WTC11 (cell line): ENCODE measurements at regions of chr19 and their contacts with region 1.

Region 1: DNA sequence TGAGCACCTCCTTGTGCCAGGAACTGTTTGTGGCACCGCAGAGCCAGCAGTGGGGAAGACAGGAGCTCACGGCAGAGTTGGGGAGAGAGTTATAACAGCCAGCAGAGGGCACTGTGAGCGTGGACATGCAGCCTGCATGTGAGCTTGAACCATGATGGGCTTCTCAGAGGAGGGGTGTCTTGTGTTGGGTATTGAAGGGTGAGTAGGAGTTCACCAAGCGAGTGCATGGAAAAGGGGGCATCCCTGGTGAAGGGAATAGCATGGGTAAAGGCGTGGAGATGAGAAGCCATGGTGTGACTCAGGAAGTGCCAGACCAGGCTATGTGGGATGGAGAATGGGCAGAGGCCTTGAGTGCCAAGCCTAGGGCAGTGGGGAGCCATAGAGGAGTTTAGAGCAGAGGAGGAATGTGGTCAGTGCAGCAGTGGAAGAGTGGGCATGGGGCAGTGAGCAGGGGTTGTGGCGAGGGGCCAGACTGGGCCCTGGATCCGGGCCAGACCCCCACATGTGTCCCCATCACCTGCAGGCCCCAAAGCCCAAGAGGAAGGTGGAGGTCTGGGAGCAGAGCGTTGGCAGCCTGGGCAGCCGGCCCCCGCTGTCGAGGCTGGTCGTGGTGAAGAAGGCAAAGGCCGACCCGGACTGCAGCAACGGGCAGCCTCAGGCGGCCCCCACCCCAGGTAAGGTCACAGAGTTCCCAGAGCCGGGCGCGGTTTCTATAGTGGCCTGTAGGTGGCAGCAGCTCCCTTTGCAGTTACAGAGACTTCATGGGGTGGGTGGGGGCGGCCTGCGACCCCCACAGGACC is 11.8 kb upstream of the SHD start:
- DNase-seq: peak; percentile 88
- ATAC-seq: peak; percentile 93
- H3K4me3 Mint-ChIP-seq: no peak overlapping the region
- H3K27ac Mint-ChIP-seq: 0 out of 2 replicates have a peak overlapping the region, but pooled peaks have one; percentile 5
- H3K4me1 Mint-ChIP-seq: no peaks in the 10 kb centered on the region; the same call in 1 of the 2 replicates
- H3K27me3 Mint-ChIP-seq: no peaks in the 10 kb centered on the region
- CTCF ChIP-seq: peak; percentile 86

Region 2: DNA sequence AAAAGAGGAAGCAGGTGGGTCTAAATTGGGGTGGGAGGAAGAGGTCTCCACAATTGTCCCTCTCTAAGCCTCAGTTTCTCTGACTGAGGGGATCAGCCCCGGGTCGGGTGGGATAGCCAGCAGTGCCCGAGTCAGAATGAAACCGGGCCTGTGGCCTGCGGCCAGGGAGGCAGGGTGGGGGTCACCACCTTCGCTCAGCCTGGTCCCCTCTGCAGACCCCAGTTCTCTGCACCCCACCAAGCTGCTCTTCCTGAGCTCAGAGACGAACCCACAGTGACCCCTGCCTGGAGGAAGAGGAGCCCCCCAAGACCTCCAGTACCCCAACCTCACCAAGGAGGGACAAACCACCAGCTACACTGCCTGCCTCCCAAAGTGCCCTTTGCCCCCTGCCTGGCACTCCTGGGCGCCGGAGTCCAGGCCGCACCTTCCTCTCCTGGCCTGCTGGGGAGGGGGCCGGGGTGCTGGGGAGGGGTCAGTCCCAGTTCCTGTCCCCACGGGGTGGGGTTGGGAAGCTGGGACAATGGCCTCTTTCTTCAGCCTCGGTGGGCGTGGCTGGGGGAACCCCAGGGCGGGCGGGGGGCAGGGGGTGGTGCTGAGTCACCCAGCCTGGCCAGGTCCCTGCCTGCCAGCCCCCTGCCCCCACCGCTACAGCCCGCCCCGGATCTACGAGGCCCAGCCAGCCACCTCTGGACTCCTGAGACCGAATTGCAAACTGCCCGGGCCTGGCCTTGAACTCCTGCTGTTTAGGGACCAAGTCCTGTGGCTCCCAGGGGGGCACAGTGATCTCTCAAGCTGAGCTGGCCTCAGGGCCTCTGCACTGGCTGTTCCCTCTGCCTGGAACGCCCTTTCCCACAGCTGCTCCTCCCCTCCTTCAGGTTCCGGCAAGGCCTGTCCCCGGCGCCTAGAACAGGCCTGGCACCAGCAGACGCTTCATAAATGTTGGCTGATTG is 215.0 kb before region 1 on chr19:
- CTCF ChIA-PET with region 1: no interaction called
- POLR2A ChIA-PET with region 1: no interaction called
- DNase-seq: no peak
- ATAC-seq: no peak
- H3K4me3 Mint-ChIP-seq: no peak overlapping the region
- H3K27ac Mint-ChIP-seq: peak overlapping the region; percentile 79
- H3K4me1 Mint-ChIP-seq: peaks cover 6% of the 10 kb centered on the region; the same call in 1 of the 2 replicates
- H3K27me3 Mint-ChIP-seq: no peaks in the 10 kb centered on the region
- CTCF ChIP-seq: no peak

Region 3: GRCh38 chr19:4139614-4140236 is 127.6 kb before region 1 on chr19:
- CTCF ChIA-PET with region 1: interaction called, 15 read pairs
- POLR2A ChIA-PET with region 1: no interaction called
- DNase-seq: peak; percentile 94
- ATAC-seq: peak; percentile 81
- H3K4me3 Mint-ChIP-seq: peak overlapping the region; percentile 31; the same call in 1 of the 2 replicates
- H3K27ac Mint-ChIP-seq: peak overlapping the region; percentile 70; the same call in 1 of the 2 replicates
- H3K4me1 Mint-ChIP-seq: peaks cover 6% of the 10 kb centered on the region
- H3K27me3 Mint-ChIP-seq: peaks cover 18% of the 10 kb centered on the region
- CTCF ChIP-seq: peak; percentile 94

Region 4: GRCh38 chr19:4256563-4256962 is 10.7 kb before region 1 on chr19:
- CTCF ChIA-PET with region 1: interaction called, 46 read pairs
- POLR2A ChIA-PET with region 1: no interaction called
- DNase-seq: no peak
- ATAC-seq: peak; percentile 41
- H3K4me3 Mint-ChIP-seq: no peak overlapping the region
- H3K27ac Mint-ChIP-seq: no peak overlapping the region
- H3K4me1 Mint-ChIP-seq: no peaks in the 10 kb centered on the region
- H3K27me3 Mint-ChIP-seq: no peaks in the 10 kb centered on the region
- CTCF ChIP-seq: no peak

Region 5: DNA sequence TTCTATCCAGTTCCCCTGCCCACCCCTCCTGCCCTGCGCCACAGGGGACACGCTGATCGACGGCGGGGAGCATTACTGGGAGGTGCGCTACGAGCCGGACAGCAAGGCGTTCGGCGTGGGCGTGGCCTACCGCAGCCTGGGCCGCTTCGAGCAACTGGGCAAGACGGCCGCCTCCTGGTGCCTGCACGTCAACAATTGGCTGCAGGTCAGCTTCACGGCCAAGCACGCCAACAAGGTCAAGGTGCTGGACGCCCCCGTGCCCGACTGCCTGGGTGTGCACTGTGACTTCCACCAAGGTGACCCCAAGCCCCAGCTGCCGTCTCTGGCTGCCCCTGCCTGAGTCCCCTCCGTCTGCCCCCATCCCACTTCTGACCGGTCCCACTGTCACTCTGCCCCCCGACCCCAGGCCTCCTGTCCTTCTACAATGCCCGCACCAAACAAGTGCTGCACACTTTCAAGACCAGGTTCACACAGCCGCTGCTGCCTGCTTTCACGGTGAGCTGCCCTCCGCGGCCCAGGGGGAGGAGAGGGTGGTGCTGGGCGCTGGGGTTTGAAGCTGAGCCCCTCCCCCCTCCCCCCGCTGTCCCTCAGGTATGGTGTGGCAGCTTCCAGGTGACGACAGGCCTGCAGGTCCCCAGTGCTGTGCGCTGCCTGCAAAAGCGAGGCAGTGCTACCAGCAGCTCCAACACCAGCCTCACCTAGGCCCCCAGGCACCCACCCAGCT is 55.8 kb after region 1 on chr19:
- CTCF ChIA-PET with region 1: interaction called, 35 read pairs
- POLR2A ChIA-PET with region 1: interaction called, 3 read pairs
- DNase-seq: no peak
- ATAC-seq: no peak
- H3K4me3 Mint-ChIP-seq: no peak overlapping the region
- H3K27ac Mint-ChIP-seq: no peak overlapping the region
- H3K4me1 Mint-ChIP-seq: peaks cover 10% of the 10 kb centered on the region
- H3K27me3 Mint-ChIP-seq: peaks cover 3% of the 10 kb centered on the region
- CTCF ChIP-seq: no peak

Region 6: GRCh38 chr19:4362861-4363510 is 95.7 kb after region 1 on chr19:
- CTCF ChIA-PET with region 1: interaction called, 70 read pairs
- POLR2A ChIA-PET with region 1: interaction called, 6 read pairs
- DNase-seq: peak; percentile 44
- ATAC-seq: peak; percentile 43
- H3K4me3 Mint-ChIP-seq: no peak overlapping the region
- H3K27ac Mint-ChIP-seq: no peak overlapping the region
- H3K4me1 Mint-ChIP-seq: peaks cover 10% of the 10 kb centered on the region
- H3K27me3 Mint-ChIP-seq: no peaks in the 10 kb centered on the region
- CTCF ChIP-seq: no peak

Region 7: DNA sequence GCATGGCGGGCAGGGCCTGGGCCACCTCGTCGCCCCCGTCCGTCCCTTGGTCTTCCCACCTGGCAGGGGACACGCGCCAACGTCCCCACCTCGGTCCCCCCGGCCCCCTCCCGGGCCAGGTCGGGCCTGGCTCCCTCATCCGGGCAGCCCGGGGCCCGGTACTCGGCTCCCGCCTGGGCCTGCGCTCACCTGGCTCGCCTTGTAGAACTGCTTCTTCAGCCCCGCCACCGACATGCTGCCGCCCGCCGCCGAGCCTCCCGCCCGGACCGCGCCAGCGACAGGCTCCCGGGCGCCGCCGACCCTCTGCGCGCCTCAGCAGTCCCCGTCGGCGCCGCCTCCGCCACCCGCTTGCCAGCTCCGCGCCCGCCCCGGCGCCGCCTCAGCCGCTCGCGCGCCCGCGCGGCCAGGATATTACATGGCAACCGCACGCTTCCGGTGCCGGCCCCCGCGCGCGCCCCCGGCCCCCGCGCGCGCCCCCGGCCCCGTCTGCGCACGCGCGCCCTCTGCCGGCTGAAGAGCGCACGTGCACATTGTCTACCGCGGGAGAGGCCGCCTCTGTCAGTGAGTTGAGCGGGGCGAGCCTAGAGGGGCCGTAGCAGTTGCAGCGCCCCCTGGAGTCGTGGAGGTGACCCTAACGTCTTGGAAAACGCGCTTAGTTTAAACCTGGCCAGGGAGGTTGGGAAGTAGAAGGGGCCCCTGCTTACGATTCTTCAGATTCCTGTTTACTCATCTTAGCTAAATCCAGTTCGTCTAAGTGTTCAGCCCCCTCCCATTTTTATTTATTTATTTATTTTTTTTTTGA is 133.0 kb after region 1 on chr19 and contains the start of gene SH3GL1:
- CTCF ChIA-PET with region 1: interaction called, 14 read pairs
- POLR2A ChIA-PET with region 1: no interaction called
- DNase-seq: peak; percentile 89
- ATAC-seq: peak; percentile 74
- H3K4me3 Mint-ChIP-seq: peak within 1 kb of the TSS; percentile 96
- H3K27ac Mint-ChIP-seq: peak within 1 kb of the TSS; percentile 97
- H3K4me1 Mint-ChIP-seq: peaks cover 38% of the 10 kb centered on the region
- H3K27me3 Mint-ChIP-seq: no peaks in the 10 kb centered on the region
- CTCF ChIP-seq: peak; percentile 92
- total RNA-seq, gene SH3GL1: 89.4 to 109 TPM (median 89.7 TPM) in 3 replicates

Region 8: DNA sequence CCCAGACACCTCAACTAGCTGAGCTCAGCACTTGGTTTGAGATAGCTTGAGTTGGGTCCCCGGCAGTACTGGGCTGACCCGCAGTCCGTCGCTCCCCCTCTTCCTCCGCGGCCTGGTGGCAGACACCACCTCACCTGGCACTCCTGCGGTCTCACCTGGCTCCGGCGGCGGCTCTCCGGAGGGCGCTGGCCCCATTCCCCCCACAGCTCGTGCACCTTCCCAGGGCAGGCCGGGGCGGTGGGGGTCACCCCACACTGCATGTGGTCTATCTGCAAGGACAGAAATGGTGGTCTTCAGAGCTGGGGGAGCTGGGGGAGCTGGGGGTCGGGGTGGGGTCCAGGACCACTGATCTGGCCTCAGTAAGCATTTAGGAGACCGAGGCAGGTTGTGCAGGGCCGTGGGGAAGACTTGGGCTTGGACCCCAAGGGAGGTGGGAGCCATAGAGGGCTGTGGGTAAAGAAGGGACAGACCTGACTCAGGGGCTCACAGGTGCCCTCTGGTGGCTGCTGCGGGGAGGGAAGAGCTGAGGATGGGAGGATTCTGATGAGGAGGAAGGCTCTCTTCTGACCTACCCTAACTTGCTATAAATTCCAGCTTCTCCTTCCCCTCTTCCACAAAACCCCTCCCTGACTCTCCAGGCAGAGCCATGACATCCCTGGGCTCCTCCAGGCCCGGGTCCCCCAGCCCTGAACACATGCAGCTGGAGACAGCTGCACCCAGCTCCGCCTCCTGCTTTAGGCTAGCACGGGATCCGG is 257.7 kb after region 1 on chr19:
- CTCF ChIA-PET with region 1: interaction called, 19 read pairs
- POLR2A ChIA-PET with region 1: no interaction called
- DNase-seq: peak; percentile 87
- ATAC-seq: peak; percentile 82
- H3K4me3 Mint-ChIP-seq: no peak overlapping the region
- H3K27ac Mint-ChIP-seq: no peak overlapping the region
- H3K4me1 Mint-ChIP-seq: no peaks in the 10 kb centered on the region
- H3K27me3 Mint-ChIP-seq: peaks cover 35% of the 10 kb centered on the region
- CTCF ChIP-seq: peak; percentile 69; the same call in 1 of the 2 replicates